CD4-positive, alpha-beta T cell (primary cell): ENCODE measurements at regions of chr11 and their contacts with region 1.

Region 1: DNA sequence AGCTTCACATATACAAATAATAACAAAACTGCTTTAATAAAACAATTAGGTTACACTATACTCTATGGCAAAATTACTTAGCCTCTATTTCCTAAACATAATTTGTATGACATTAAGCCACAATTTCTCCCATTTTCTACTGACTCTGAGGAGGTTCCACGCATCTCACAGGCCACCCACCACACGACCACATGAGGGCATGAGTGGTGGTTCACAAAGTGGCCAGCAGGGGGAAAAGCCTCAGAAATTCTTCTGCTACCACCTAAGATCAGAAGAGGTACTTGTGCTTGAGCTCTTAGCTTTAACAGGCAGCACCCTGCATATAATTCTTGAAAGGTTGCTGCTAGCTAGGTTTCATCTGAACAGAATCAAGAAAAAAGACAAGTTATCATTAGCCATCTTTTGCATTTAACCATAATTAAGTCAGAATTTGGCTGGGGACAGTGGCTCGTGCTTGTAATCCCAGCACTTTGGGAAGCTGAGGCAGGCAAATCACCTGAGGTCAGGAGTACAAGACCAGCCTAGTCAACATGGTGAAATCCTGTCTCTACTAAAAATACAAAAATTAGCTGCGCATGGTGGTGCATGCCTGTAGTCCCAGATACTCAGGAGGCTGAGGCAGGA is 7.7 kb downstream of the LPXN start:
- DNase-seq: peak; percentile 61 to 90 (median 75)
- ATAC-seq: peak; percentile 98
- H3K4me3 ChIP-seq: no peak overlapping the region
- H3K4me3 Mint-ChIP-seq: peak overlapping the region; percentile 65
- H3K27ac ChIP-seq: no peak overlapping the region
- H3K27ac Mint-ChIP-seq: peak overlapping the region; percentile 57
- H3K4me1 ChIP-seq: peaks cover 49% of the 10 kb centered on the region
- H3K4me1 Mint-ChIP-seq: peaks cover 64% of the 10 kb centered on the region
- H3K27me3 ChIP-seq: no peaks in the 10 kb centered on the region
- H3K27me3 Mint-ChIP-seq: no peaks in the 10 kb centered on the region
- CTCF ChIP-seq: peak; percentile 81

Region 2: GRCh38 chr11:58011771-58012170 is 556.2 kb before region 1 on chr11:
- CTCF ChIA-PET with region 1: no interaction called
- POLR2A ChIA-PET with region 1: no interaction called
- intact Hi-C with region 1: no loop called
- DNase-seq: no peak
- ATAC-seq: no peak
- H3K4me3 ChIP-seq: no peak overlapping the region
- H3K4me3 Mint-ChIP-seq: no peak overlapping the region
- H3K27ac ChIP-seq: no peak overlapping the region
- H3K27ac Mint-ChIP-seq: no peak overlapping the region
- H3K4me1 ChIP-seq: no peaks in the 10 kb centered on the region
- H3K4me1 Mint-ChIP-seq: no peaks in the 10 kb centered on the region
- H3K27me3 ChIP-seq: peaks cover 0 to 2% of the 10 kb centered on the region in 2 experiments
- H3K27me3 Mint-ChIP-seq: peaks cover 19% of the 10 kb centered on the region
- CTCF ChIP-seq: no peak

Region 3: DNA sequence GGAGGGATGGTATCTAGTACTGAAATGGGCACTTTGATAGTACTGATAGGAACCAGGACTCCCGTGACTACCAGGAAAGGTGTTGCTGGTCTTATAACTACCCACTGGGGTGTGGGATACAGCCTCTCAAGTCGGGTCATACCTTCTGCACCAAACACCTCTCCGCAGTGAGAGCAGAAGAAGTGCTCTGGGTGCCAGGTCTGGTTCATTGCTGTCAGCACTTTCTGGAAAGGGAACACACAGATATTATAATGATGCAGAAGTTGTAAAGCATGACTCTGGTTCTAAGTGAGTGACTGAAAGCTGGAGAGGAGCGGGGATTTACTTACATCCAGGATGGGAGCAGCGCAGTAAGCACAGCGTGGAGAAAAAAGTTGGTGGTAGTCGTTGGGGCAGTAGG is 18.4 kb before region 1 on chr11:
- CTCF ChIA-PET with region 1: interaction called, 23 read pairs
- POLR2A ChIA-PET with region 1: interaction called, 3 read pairs
- intact Hi-C with region 1: no loop called
- DNase-seq: no peak
- ATAC-seq: no peak
- H3K4me3 ChIP-seq: no peak overlapping the region
- H3K4me3 Mint-ChIP-seq: no peak overlapping the region
- H3K27ac ChIP-seq: no peak overlapping the region
- H3K27ac Mint-ChIP-seq: no peak overlapping the region
- H3K4me1 ChIP-seq: no peaks in the 10 kb centered on the region
- H3K4me1 Mint-ChIP-seq: peaks cover 18% of the 10 kb centered on the region
- H3K27me3 ChIP-seq: no peaks in the 10 kb centered on the region
- H3K27me3 Mint-ChIP-seq: no peaks in the 10 kb centered on the region
- CTCF ChIP-seq: no peak

Region 4: GRCh38 chr11:58592760-58593472 is 24.9 kb after region 1 on chr11:
- CTCF ChIA-PET with region 1: interaction called, 14 read pairs
- POLR2A ChIA-PET with region 1: interaction called, 3 read pairs
- intact Hi-C with region 1: no loop called
- DNase-seq: peak in 3 of 14 experiments; percentile 21 to 30 (median 25)
- ATAC-seq: peak; percentile 82
- H3K4me3 ChIP-seq: no peak overlapping the region
- H3K4me3 Mint-ChIP-seq: no peak overlapping the region
- H3K27ac ChIP-seq: no peak overlapping the region
- H3K27ac Mint-ChIP-seq: peak overlapping the region; percentile 57
- H3K4me1 ChIP-seq: peaks cover 14% of the 10 kb centered on the region
- H3K4me1 Mint-ChIP-seq: peaks cover 79% of the 10 kb centered on the region
- H3K27me3 ChIP-seq: no peaks in the 10 kb centered on the region
- H3K27me3 Mint-ChIP-seq: no peaks in the 10 kb centered on the region
- CTCF ChIP-seq: no peak

Region 5: GRCh38 chr11:58616594-58616993 is 48.6 kb after region 1 on chr11:
- CTCF ChIA-PET with region 1: interaction called, 17 read pairs
- POLR2A ChIA-PET with region 1: interaction called, 3 read pairs
- intact Hi-C with region 1: loop called in 1 of 2 experiments (anchors 5 kb)
- DNase-seq: no peak
- ATAC-seq: no peak
- H3K4me3 ChIP-seq: no peak overlapping the region
- H3K4me3 Mint-ChIP-seq: no peak overlapping the region
- H3K27ac ChIP-seq: no peak overlapping the region
- H3K27ac Mint-ChIP-seq: peak overlapping the region; percentile 36
- H3K4me1 ChIP-seq: no peaks in the 10 kb centered on the region
- H3K4me1 Mint-ChIP-seq: peaks cover 10% of the 10 kb centered on the region
- H3K27me3 ChIP-seq: no peaks in the 10 kb centered on the region
- H3K27me3 Mint-ChIP-seq: no peaks in the 10 kb centered on the region
- CTCF ChIP-seq: no peak